Testis (tissue), 5 donors: ENCODE measurements at regions of chr16 and their contacts with region 1.

Region 1: DNA sequence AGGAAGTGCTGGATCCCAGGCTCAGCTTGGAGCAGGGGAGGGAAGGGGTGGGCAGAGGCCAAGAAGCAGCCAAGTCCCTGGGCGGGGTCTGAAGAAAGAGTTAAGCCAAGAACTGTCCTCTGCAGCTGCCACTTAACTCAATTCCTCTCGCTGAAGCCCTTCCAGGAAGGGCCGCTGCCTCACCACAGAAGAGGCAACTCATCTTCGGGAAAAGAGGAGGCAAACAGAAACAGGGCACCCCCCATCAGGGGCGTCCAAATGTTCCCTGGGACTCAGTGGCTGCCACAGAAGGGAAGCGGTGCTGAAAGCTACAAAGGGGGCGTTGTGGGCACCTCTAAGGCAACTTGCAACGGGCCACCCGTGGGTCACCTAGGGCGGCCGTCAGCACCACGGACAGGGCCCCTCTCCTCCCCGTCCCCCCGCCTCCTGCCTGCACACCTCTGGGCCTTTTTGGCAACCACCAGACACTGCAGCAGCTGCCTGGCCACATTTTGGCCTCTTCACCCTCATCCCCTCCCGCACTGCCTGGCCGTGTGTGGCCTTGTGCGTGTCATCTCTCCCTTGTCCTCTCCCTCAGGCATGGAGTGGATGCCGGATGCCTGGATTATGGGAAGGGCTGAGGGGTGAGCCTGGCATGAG is 2.5 kb downstream of the TLCD3B start:
- DNase-seq: peak; percentile 37
- H3K4me3 ChIP-seq: no peak overlapping the region
- H3K27ac ChIP-seq: no peak overlapping the region
- H3K4me1 ChIP-seq: peaks cover 9% of the 10 kb centered on the region
- H3K27me3 ChIP-seq: no peaks in the 10 kb centered on the region
- CTCF ChIP-seq: no peak
- POLR2A ChIP-seq: no peak

Region 2: DNA sequence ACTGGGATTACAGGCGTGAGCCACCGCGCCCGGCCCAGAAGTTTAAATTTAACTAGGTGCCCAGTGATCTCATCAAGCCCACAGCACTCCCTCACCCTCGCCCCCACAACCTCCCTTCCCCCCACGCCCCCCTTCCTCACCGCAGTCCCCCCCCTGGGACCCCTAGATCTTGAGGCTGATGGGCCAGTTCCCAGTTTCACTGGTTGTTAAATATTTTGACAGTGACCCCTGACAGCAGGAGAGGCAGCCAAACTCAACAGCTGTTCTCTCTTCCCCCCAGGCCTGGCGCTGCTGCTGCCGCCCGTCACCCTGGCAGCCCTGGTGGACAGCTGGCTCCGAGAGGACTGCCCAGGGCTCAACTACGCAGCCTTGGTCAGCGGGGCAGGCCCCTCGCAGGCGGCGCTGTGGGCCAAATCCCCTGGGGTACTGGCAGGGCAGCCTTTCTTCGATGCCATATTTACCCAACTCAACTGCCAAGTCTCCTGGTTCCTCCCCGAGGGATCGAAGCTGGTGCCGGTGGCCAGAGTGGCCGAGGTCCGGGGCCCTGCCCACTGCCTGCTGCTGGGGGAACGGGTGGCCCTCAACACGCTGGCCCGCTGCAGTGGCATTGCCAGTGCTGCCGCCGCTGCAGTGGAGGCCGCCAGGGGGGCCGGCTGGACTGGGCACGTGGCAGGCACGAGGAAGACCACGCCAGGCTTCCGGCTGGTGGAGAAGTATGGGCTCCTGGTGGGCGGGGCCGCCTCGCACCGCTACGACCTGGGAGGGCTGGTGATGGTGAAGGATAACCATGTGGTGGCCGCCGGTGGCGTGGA is 334.0 kb before region 1 on chr16:
- intact Hi-C with region 1: loop called (anchors 10 kb)
- DNase-seq: no peak
- H3K4me3 ChIP-seq: no peak overlapping the region
- H3K27ac ChIP-seq: no peak overlapping the region
- H3K4me1 ChIP-seq: no peaks in the 10 kb centered on the region
- H3K27me3 ChIP-seq: no peaks in the 10 kb centered on the region
- CTCF ChIP-seq: no peak
- POLR2A ChIP-seq: no peak

Region 3: DNA sequence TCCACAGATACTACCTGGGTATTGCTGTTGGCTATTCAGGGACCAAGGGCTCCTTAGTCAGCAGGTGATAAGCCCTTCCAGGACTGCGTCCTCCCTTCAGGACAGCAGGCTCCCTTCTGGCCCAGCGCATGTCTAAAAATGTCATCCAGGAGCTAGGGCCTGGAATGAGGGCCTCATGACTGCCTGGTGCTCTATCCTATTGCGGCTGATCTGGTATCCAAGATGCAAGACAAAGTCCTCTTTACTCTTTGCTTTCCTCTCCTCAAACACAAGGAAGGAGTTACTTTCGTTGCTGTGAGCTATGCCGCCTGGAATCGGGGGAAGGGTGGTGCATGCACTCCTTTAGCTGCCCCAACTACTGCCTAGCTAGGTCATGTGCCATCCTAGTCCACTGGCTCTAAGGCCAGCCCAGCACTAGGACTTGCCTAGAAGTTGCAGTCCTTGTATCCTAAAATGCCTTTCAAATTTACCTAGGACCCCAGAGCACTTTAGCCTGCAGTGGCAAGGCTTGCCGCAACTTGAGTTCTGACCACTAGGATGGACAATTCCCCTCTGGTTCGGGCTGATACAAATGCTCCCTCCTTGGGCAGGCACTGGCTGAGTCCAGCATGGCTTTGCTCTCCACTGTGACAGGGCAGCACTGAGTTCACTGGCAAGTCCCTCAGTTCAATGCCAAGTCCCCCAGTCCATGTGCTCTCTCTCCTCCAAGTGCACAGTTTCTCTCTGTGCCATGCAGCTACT is 76.8 kb before region 1 on chr16:
- intact Hi-C with region 1: no loop called
- DNase-seq: no peak
- H3K4me3 ChIP-seq: no peak overlapping the region
- H3K27ac ChIP-seq: no peak overlapping the region
- H3K4me1 ChIP-seq: no peaks in the 10 kb centered on the region
- H3K27me3 ChIP-seq: no peaks in the 10 kb centered on the region
- CTCF ChIP-seq: no peak
- POLR2A ChIP-seq: no peak